GM12878 (cell line): ENCODE measurements at regions of chr11 and their contacts with region 1.

Region 1: DNA sequence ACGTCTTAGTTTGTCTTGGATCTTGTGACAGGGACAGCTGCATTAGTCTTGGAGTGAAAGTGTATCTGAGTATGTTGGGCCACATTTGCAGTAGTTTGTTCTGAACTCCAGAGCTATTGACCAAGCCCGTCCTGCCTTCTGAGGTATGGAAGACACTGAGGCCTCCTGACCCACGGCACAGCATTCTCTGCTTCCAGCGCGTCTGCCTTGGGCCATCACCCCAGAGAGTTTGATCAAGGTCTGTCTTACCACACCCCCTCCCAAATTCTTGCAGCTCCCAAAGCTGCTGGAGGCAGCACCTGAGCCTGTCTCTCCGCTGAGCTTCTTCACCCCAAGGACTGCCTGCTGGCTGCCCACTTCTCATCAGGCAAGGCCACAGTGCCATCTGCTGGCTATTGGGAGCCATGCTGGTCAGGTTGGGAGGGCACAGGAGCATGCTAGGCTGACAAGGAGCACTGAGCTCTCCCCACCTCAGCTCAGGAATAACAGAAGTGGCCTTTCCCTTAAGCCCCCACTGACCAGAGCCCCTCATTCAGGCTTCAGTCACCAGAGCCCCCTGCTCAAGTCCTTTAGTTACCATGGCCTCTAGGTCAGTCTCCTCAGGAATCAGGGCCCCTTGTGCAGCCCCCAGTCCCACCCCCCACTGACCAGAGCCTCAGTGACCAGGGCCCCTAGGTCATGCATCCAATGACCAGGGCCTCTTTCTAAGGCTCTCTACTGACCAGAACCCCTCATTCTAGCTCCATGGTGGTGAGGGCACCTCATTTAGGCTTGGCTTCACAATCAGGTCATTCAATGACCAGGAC is 27.2 kb upstream of the SMPD1 start:
- DNase-seq: no peak
- ATAC-seq: peak; percentile 100
- H3K4me3 ChIP-seq: no peak overlapping the region
- H3K27ac ChIP-seq: no peak overlapping the region
- H3K4me1 ChIP-seq: no peaks in the 10 kb centered on the region
- H3K27me3 ChIP-seq: peaks cover 0 to 2% of the 10 kb centered on the region in 2 experiments; a peak in 1 of 4 replicates
- CTCF ChIP-seq: peak; percentile 88 to 95 (median 91)
- EP300 ChIP-seq: no peak
- POLR2A ChIP-seq: no peak
- RAD21 ChIP-seq: peak; percentile 84

Region 2: DNA sequence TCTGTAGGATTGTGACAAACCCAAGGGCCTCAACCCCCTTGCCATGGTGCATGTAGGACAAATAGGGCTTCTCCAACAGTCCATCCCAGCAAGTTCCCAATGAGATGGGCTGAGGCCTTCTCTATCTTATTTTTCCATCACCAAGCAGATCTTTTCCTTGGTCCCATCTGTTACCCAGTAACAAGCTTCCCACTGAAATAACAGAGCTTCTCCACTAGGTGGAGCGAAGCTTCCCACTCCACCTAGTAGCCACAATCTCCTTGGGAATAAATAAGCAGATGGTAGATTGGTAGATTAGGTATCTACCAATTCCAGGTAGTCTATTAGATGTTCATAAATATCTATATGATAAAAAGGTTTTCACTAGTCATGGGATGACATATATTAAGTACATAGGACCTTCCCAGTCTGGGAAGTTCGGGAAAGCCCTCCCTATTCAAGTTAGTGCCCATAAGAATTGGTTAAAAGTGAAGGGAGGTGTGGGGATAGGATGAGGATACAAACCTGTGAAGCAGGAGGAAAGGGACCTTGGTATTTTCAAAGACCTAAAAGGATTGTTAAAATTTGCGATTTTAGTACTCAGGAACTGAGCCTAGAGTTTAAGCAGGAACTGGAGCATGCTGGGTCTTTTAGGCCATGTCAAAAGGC is 370.3 kb before region 1 on chr11:
- CTCF ChIA-PET with region 1: interaction called, 11 read pairs
- POLR2A ChIA-PET with region 1: no interaction called
- RAD21 ChIA-PET with region 1: interaction called, 3 read pairs
- SMC1A ChIA-PET with region 1: no interaction called
- in situ Hi-C with region 1: no loop called
- intact Hi-C with region 1: no loop called
- DNase-seq: no peak
- ATAC-seq: peak; percentile 52; the same call in 2 of the 3 replicates
- H3K4me3 ChIP-seq: no peak overlapping the region
- H3K27ac ChIP-seq: no peak overlapping the region
- H3K4me1 ChIP-seq: no peaks in the 10 kb centered on the region
- H3K27me3 ChIP-seq: no peaks in the 10 kb centered on the region
- CTCF ChIP-seq: peak; percentile 43 to 55 (median 49); a peak in 5 of 6 replicates
- EP300 ChIP-seq: no peak
- POLR2A ChIP-seq: no peak
- RAD21 ChIP-seq: peak; percentile 37

Region 3: DNA sequence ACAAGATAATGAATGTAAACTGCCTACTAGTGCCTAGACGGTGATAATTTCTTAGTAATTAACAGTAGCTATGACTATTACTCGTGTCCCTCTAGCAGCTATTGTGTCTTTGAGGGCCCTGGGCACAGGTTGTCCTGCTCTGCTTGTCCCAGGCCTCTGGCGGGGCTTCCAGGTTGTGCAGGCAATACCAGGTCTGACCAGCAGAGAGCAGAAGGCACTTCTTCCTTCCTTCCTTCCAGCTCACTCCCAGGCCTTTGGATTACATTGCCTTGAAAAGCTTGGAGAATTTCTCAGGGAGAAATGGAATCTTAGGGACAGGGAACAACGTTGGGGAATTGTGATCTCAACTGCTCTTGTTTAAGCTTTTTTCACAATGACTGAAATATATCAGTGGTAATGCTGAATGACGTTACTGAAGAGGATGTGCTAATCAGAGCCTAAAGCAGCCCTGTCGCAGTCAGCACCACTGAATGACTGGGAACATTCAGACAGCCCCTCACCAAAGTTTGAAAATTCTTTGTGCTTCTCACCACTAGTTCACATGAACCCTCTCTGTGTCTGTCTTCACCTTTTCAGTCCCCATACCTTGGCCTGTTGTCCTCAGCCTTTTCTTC is 111.8 kb before region 1 on chr11:
- CTCF ChIA-PET with region 1: interaction called, 43 read pairs
- POLR2A ChIA-PET with region 1: no interaction called
- RAD21 ChIA-PET with region 1: interaction called, 11 read pairs
- SMC1A ChIA-PET with region 1: interaction called, 10 read pairs
- in situ Hi-C with region 1: no loop called
- intact Hi-C with region 1: no loop called
- DNase-seq: no peak
- ATAC-seq: peak; percentile 91
- H3K4me3 ChIP-seq: no peak overlapping the region
- H3K27ac ChIP-seq: no peak overlapping the region
- H3K4me1 ChIP-seq: no peaks in the 10 kb centered on the region
- H3K27me3 ChIP-seq: 0 out of 4 replicates have a peak, but pooled peaks cover 0 to 3% of the 10 kb centered on the region in 2 experiments
- CTCF ChIP-seq: peak; percentile 68 to 86 (median 75)
- EP300 ChIP-seq: no peak
- POLR2A ChIP-seq: no peak
- RAD21 ChIP-seq: peak; percentile 56

Region 4: DNA sequence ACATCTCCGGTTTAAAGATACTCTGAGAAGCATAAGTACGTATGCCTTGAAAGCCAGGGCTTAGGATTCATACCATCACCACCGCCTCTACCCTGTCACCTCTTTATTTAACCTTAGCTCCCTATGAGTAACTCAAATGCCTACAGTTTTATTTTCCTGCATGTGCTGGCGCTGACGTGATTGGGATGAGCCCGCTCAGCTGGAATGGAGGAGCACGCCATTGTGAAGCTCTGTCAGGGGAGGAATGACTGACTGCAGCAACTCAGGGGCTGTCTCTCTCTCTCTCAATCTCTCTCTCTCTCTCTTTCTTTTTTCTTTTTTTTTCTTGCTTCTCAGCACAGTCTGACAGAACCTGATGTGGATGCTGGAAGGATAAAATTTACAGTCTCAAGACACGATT is 55.2 kb before region 1 on chr11:
- CTCF ChIA-PET with region 1: interaction called, 17 read pairs
- POLR2A ChIA-PET with region 1: no interaction called
- RAD21 ChIA-PET with region 1: interaction called, 4 read pairs
- SMC1A ChIA-PET with region 1: interaction called, 3 read pairs
- in situ Hi-C with region 1: no loop called
- intact Hi-C with region 1: no loop called
- DNase-seq: no peak
- ATAC-seq: no peak
- H3K4me3 ChIP-seq: no peak overlapping the region
- H3K27ac ChIP-seq: no peak overlapping the region
- H3K4me1 ChIP-seq: no peaks in the 10 kb centered on the region
- H3K27me3 ChIP-seq: peaks cover 0 to 2% of the 10 kb centered on the region in 2 experiments; a peak in 1 of 4 replicates
- CTCF ChIP-seq: no peak
- EP300 ChIP-seq: no peak
- POLR2A ChIP-seq: no peak
- RAD21 ChIP-seq: no peak

Region 5: GRCh38 chr11:6321961-6322362 is 41.1 kb before region 1 on chr11:
- CTCF ChIA-PET with region 1: interaction called, 26 read pairs
- POLR2A ChIA-PET with region 1: no interaction called
- RAD21 ChIA-PET with region 1: interaction called, 3 read pairs
- SMC1A ChIA-PET with region 1: no interaction called
- in situ Hi-C with region 1: no loop called
- intact Hi-C with region 1: no loop called
- DNase-seq: no peak
- ATAC-seq: peak; percentile 46
- H3K4me3 ChIP-seq: no peak overlapping the region
- H3K27ac ChIP-seq: peak overlapping the region; percentile 37; the same call in 1 of the 2 replicates
- H3K4me1 ChIP-seq: peaks cover 26% of the 10 kb centered on the region
- H3K27me3 ChIP-seq: no peaks in the 10 kb centered on the region
- CTCF ChIP-seq: no peak
- EP300 ChIP-seq: no peak
- POLR2A ChIP-seq: no peak
- RAD21 ChIP-seq: no peak